Activated B cell treated with CpG ODN at 0.5 μM for 24 hours (primary cell): ENCODE measurements at regions of chr15 and their contacts with region 1.

Region 1: GRCh38 chr15:69666411-69666882 is 213.8 kb downstream of the RPLP1 start:
- DNase-seq: no peak
- ATAC-seq: peak; percentile 51
- H3K4me3 Mint-ChIP-seq: peak overlapping the region; percentile 36
- H3K27ac Mint-ChIP-seq: peak overlapping the region; percentile 67
- H3K4me1 Mint-ChIP-seq: peaks cover 55% of the 10 kb centered on the region
- H3K27me3 Mint-ChIP-seq: peaks cover 6% of the 10 kb centered on the region
- CTCF ChIP-seq: no peak

Region 2: GRCh38 chr15:69141286-69141701 is 525.2 kb before region 1 on chr15:
- CTCF ChIA-PET with region 1: no interaction called
- POLR2A ChIA-PET with region 1: no interaction called
- intact Hi-C with region 1: no loop called
- DNase-seq: no peak
- ATAC-seq: no peak
- H3K4me3 Mint-ChIP-seq: no peak overlapping the region
- H3K27ac Mint-ChIP-seq: no peak overlapping the region
- H3K4me1 Mint-ChIP-seq: no peaks in the 10 kb centered on the region
- H3K27me3 Mint-ChIP-seq: peaks cover 54% of the 10 kb centered on the region
- CTCF ChIP-seq: no peak

Region 3: GRCh38 chr15:69583626-69584025 is 82.8 kb before region 1 on chr15:
- CTCF ChIA-PET with region 1: no interaction called
- POLR2A ChIA-PET with region 1: no interaction called
- intact Hi-C with region 1: loop called (anchors 5 kb)
- DNase-seq: no peak
- ATAC-seq: peak; percentile 84
- H3K4me3 Mint-ChIP-seq: peak overlapping the region; percentile 50
- H3K27ac Mint-ChIP-seq: no peak overlapping the region
- H3K4me1 Mint-ChIP-seq: peaks cover 12% of the 10 kb centered on the region
- H3K27me3 Mint-ChIP-seq: peaks cover 4% of the 10 kb centered on the region
- CTCF ChIP-seq: no peak

Region 4: GRCh38 chr15:69679623-69680228 is 13.3 kb after region 1 on chr15:
- CTCF ChIA-PET with region 1: no interaction called
- POLR2A ChIA-PET with region 1: interaction called, 5 read pairs
- intact Hi-C with region 1: loop called (anchors 1 kb)
- DNase-seq: peak; percentile 44
- ATAC-seq: peak; percentile 93
- H3K4me3 Mint-ChIP-seq: no peak overlapping the region
- H3K27ac Mint-ChIP-seq: peak overlapping the region; percentile 68
- H3K4me1 Mint-ChIP-seq: peaks cover 25% of the 10 kb centered on the region
- H3K27me3 Mint-ChIP-seq: peaks cover 23% of the 10 kb centered on the region
- CTCF ChIP-seq: no peak

Region 5: GRCh38 chr15:69719527-69720240 is 53.2 kb after region 1 on chr15:
- CTCF ChIA-PET with region 1: no interaction called
- POLR2A ChIA-PET with region 1: no interaction called
- intact Hi-C with region 1: loop called (anchors 5 kb)
- DNase-seq: no peak
- ATAC-seq: peak; percentile 90
- H3K4me3 Mint-ChIP-seq: no peak overlapping the region
- H3K27ac Mint-ChIP-seq: peak overlapping the region; percentile 31
- H3K4me1 Mint-ChIP-seq: peaks cover 58% of the 10 kb centered on the region
- H3K27me3 Mint-ChIP-seq: peaks cover 3% of the 10 kb centered on the region
- CTCF ChIP-seq: no peak

Region 6: GRCh38 chr15:70474471-70475396 is 808.3 kb after region 1 on chr15:
- CTCF ChIA-PET with region 1: no interaction called
- POLR2A ChIA-PET with region 1: interaction called, 10 read pairs
- intact Hi-C with region 1: no loop called
- DNase-seq: no peak
- ATAC-seq: peak; percentile 29
- H3K4me3 Mint-ChIP-seq: peak overlapping the region; percentile 70
- H3K27ac Mint-ChIP-seq: peak overlapping the region; percentile 65
- H3K4me1 Mint-ChIP-seq: peaks cover 39% of the 10 kb centered on the region
- H3K27me3 Mint-ChIP-seq: no peaks in the 10 kb centered on the region
- CTCF ChIP-seq: no peak